Tibial artery (tissue), 4 donors: ENCODE measurements at regions of chr16 and their contacts with region 1.

Region 1: DNA sequence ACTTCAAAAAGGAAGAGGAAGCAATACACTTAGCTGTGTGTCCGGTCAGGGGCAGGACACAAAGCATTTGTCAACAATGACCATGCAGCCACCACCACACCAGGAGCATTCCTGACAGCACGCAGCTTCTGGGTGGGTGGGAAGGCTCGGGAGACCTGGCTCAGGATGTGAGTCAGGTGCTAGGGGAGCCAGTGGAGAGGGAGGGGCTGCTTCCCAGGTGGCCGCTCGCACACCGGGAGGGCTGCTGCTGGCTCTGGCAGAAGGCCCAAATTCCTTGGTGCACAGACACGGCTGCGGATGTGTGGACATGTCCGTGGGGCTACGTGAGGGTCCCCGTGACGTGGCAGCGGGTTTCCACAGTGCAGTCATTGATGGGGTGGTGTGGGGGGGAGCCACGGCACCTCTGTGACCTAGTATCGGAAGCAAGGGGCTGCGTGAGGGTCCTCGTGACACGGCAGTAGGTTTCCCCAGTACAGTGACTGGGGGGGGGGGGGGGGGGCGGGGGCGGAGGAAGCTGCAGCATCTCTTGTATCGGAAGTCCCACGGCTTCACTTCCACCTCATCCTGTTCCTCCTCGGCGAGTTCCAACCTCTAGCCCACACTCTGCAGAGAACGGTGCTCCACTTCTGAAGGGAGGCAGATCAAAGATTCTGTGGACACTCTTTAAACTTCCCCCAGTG is 112.8 kb downstream of the ZNF778 start:
- DNase-seq: no peak
- H3K4me3 ChIP-seq: no peak overlapping the region
- H3K27ac ChIP-seq: no peak overlapping the region
- H3K4me1 ChIP-seq: peaks cover 5 to 66% (median 49%) of the 10 kb centered on the region in 4 donors
- H3K27me3 ChIP-seq: no peaks in the 10 kb centered on the region
- CTCF ChIP-seq: no peak

Region 2: DNA sequence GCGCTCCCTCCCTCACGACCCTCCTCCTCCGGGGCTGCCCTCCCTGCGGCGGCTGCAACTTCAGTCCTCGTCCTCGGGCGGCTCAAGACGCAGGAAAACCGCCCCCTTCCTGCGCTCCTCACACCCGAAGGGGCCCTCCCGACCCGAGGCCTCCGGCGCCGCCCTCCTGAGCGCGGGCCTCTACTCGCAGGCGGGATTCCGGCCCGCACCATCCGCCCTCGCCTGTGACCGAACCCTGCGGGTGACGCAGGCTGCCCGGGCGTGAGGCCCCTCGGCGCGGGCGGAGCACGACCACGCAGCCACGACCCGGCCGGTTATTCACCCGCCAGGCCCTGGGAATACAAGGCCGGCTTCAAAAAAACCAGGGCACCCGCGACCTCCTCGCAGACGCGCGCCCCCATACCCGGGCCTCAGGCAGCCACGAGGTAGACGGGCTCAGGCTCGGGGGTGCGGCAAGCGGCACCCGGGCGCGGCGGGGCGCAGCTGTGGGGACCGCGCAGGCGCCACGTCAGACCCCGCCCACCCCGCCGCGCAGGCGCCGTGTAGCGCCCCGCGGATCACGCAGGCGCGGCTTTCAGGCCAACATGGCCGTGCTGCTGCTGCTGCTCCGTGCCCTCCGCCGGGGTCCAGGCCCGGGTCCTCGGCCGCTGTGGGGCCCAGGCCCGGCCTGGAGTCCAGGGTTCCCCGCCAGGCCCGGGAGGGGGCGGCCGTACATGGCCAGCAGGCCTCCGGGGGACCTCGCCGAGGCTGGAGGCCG is 177.7 kb after region 1 on chr16 and contains the start of gene SPG7:
- intact Hi-C with region 1: loop called (anchors 10 kb)
- DNase-seq: peak; percentile 75 to 90
- H3K4me3 ChIP-seq: peak within 1 kb of the TSS; percentile 83 to 88
- H3K27ac ChIP-seq: peak within 1 kb of the TSS; percentile 85 to 90
- H3K4me1 ChIP-seq: peaks cover 0 to 39% (median 25%) of the 10 kb centered on the region in 4 donors
- H3K27me3 ChIP-seq: no peaks in the 10 kb centered on the region
- CTCF ChIP-seq: no peak

Region 3: GRCh38 chr16:89633064-89633631 is 302.8 kb after region 1 on chr16:
- intact Hi-C with region 1: loop called (anchors 10 kb)
- DNase-seq: no peak
- H3K4me3 ChIP-seq: no peak overlapping the region
- H3K27ac ChIP-seq: no peak overlapping the region
- H3K4me1 ChIP-seq: no peaks in the 10 kb centered on the region
- H3K27me3 ChIP-seq: peaks cover 0 to 67% of the 10 kb centered on the region in 2 donors
- CTCF ChIP-seq: no peak